ENCODE measurements at regions of chr4 and their contacts with region 1.

Region 1: DNA sequence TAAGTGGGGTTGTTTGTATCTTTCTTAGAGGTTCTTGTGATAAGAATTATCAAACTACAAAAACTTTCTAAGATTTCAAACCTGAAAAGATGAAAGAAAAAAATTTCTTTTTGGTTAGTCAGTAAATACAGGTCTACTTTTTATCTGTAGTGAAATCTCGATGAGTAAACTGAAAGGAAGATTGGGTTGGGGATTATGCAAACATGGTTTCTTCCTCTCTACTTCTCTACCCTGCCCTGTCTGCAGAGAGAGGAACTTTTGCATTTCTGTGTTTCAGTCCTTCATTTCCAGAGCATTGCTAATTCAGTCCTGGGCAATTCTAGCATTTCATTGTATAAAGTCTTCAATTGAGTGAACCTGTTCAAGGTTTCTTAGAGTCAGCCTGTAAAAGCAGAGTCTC is 51.6 kb upstream of the IL2 start:
- DNase-seq: no peak
- H3K4me3 Mint-ChIP-seq: peak overlapping the region; percentile 59
- H3K27ac Mint-ChIP-seq: peak overlapping the region; percentile 87
- H3K4me1 Mint-ChIP-seq: peaks cover 73% of the 10 kb centered on the region
- H3K27me3 Mint-ChIP-seq: no peaks in the 10 kb centered on the region

Region 2: DNA sequence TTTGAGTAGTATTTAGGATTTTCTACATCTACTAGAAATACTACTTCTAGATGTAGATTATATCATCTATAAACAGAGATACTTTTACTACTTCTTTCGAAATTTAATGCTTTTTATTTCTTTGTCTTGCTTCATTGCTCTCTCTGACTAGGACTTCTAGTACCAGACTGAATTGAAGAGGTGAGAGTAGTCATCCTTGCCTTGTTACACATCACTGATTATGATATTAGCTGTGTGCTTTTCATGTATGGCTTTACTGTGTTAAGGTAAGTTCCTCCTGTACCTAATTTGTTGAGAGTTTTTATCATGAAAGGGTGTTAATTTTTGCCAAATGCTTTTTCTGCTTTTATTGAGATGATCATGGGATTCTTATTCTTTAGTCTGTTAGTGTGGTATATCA is 32.0 kb before region 1 on chr4:
- CTCF ChIA-PET with region 1: no interaction called
- POLR2A ChIA-PET with region 1: no interaction called
- intact Hi-C with region 1: loop called (anchors 2 kb)
- DNase-seq: no peak
- H3K4me3 Mint-ChIP-seq: no peak overlapping the region
- H3K27ac Mint-ChIP-seq: no peak overlapping the region
- H3K4me1 Mint-ChIP-seq: peaks cover 16% of the 10 kb centered on the region
- H3K27me3 Mint-ChIP-seq: no peaks in the 10 kb centered on the region

Region 3: DNA sequence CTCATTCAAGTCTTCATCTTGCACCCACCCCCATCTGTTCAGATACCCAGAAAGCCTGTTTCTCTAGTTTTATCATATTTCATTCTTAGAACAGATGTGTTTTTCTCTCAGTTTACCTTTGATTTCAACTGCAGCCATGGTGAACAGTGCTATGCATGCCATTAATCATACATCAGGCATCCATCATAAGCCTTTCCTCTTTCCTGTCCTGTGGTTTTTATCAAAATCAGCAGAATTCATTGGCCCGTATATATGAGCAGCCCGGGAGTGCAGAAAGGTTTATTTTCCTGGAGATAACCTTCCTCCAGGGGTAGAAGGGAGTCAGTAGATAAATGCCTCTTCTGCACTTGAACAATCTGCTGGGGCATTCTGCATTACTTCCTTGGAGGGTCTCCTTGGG is 47.1 kb after region 1 on chr4:
- CTCF ChIA-PET with region 1: no interaction called
- POLR2A ChIA-PET with region 1: no interaction called
- intact Hi-C with region 1: loop called (anchors 1 kb)
- DNase-seq: no peak
- H3K4me3 Mint-ChIP-seq: no peak overlapping the region
- H3K27ac Mint-ChIP-seq: peak overlapping the region; percentile 43
- H3K4me1 Mint-ChIP-seq: peaks cover 67% of the 10 kb centered on the region
- H3K27me3 Mint-ChIP-seq: no peaks in the 10 kb centered on the region

Region 4: DNA sequence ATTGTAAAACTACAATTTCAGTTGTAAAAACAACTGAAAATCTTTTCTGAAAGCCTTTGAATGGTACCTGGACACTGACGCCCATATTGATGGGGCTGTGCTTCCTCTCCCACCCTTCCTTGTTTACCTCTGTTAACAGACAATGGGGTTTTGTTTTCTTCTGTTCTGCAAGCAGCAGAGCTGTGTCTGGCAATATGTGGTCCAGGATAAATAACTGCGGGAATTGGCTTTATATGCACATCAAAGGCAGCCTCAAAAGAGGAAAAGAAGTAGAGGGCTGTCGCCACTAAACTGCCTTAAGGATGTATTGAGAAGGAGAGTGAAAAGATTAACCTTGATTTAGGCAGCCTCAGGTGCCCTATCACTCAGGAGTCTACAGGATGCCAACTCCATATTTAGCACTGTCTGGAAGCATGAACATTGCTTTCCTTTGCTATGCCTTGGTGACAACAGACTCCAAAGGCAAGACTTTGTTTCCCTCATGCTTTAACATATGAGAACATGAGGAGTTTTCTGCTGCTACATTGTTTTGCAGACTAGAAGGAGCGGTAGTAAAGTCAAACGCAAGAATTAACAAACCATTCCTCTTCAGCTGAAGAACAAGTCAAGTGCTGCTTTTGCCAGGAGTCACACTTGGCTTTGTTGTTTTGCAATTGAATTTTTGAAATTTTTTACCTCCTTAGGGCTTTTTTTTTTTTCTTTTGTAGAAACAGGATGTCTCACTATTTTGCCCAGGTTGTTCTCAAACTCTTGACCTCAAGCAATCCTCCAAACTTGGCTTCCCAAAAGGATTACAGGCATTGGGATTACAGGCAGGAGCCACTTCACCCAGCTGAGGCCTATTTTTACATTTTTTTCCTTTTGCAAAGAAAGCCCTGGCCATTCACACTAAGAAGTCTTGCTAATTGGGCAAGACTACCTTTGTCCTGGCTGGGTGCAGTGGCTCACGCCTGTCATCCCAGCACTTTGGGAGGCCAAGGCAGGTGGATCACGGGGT is 109.8 kb after region 1 on chr4:
- CTCF ChIA-PET with region 1: no interaction called
- POLR2A ChIA-PET with region 1: no interaction called
- intact Hi-C with region 1: loop called (anchors 5 kb)
- DNase-seq: no peak
- H3K4me3 Mint-ChIP-seq: peak overlapping the region; percentile 76
- H3K27ac Mint-ChIP-seq: peak overlapping the region; percentile 87
- H3K4me1 Mint-ChIP-seq: peaks cover 70% of the 10 kb centered on the region
- H3K27me3 Mint-ChIP-seq: no peaks in the 10 kb centered on the region

Region 5: DNA sequence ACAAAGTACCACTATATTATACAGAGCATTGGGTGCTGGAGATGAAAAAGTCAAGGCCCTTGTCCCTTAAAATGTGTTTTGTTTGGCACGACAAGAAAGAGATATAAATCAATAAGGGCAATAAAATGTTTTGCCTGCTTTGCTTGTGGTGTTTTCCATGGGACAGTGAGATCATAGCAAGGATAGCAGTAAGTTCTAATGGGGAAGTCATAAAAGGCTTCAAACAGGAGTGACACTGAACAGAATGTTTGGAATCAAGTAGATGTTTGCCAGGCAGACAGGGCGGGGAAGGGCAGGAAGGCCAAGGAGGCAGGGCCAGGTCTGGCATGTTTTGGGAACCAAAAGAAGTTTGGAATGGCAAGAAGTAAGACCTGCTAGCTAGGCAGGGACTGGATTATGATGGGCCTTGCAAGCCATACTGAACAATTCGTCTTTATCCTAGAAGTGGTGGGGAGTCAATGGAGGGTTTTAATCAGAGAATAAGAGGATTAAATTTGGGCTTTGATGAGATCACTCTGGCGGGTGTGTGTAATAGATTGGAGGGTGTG is 335.0 kb after region 1 on chr4:
- CTCF ChIA-PET with region 1: no interaction called
- POLR2A ChIA-PET with region 1: no interaction called
- intact Hi-C with region 1: no loop called
- DNase-seq: no peak
- H3K4me3 Mint-ChIP-seq: no peak overlapping the region
- H3K27ac Mint-ChIP-seq: no peak overlapping the region
- H3K4me1 Mint-ChIP-seq: peaks cover 6% of the 10 kb centered on the region
- H3K27me3 Mint-ChIP-seq: peaks cover 6% of the 10 kb centered on the region

Region 6: DNA sequence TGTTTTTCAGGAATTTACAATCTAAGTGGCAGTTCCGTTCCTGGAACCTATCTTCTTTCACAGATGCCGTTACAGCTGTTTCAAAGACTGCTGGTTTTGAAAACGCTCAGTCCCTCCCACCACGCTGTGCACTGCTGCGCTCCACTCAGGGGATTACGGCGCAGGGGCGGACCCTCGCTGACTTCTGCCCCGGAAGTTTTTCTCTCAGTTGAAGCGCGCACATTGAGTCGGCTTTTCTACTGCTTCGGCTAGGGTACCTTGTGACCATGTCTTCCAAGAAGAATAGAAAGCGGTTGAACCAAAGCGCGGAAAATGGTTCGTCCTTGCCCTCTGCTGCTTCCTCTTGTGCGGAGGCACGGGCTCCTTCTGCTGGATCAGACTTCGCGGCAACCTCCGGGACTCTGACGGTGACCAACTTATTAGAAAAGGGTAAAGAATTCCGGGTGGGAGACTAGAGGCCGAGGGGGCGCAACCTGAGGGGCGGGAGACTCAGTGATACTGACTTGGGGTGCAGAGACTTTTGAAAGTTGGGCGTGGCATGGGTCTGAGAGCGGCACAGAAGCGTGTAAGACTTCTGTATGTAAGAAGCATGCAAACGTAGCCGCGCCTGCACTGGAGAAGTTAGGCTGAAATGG is 414.9 kb after region 1 on chr4:
- CTCF ChIA-PET with region 1: no interaction called
- POLR2A ChIA-PET with region 1: no interaction called
- intact Hi-C with region 1: no loop called
- DNase-seq: peak; percentile 94
- H3K4me3 Mint-ChIP-seq: peak overlapping the region; percentile 94
- H3K27ac Mint-ChIP-seq: peak overlapping the region; percentile 90
- H3K4me1 Mint-ChIP-seq: peaks cover 11% of the 10 kb centered on the region
- H3K27me3 Mint-ChIP-seq: no peaks in the 10 kb centered on the region

Measured in activated CD4-positive, alpha-beta memory T cell treated with anti-CD3 and anti-CD28 coated beads for 36 hours (primary cell).